ENCODE measurements at regions of chr15 and their contacts with region 1.

Region 1: GRCh38 chr15:25933456-25934158 is 70.5 kb upstream of the ATP10A start:
- DNase-seq: peak; percentile 58 to 69 (median 63)
- H3K4me3 ChIP-seq: peak overlapping the region in 1 of 2 donors; percentile 50
- H3K4me3 Mint-ChIP-seq: peak overlapping the region; percentile 85 to 96 (median 90)
- H3K27ac ChIP-seq: no peak overlapping the region
- H3K27ac Mint-ChIP-seq: peak overlapping the region in 5 of 7 donors; percentile 64 to 79 (median 72)
- H3K4me1 ChIP-seq: peaks cover 8% of the 10 kb centered on the region
- H3K4me1 Mint-ChIP-seq: peaks cover 2 to 6% (median 4%) of the 10 kb centered on the region in 4 donors
- H3K27me3 ChIP-seq: no peaks in the 10 kb centered on the region
- H3K27me3 Mint-ChIP-seq: peaks cover 3 to 6% of the 10 kb centered on the region in 2 donors

Region 2: DNA sequence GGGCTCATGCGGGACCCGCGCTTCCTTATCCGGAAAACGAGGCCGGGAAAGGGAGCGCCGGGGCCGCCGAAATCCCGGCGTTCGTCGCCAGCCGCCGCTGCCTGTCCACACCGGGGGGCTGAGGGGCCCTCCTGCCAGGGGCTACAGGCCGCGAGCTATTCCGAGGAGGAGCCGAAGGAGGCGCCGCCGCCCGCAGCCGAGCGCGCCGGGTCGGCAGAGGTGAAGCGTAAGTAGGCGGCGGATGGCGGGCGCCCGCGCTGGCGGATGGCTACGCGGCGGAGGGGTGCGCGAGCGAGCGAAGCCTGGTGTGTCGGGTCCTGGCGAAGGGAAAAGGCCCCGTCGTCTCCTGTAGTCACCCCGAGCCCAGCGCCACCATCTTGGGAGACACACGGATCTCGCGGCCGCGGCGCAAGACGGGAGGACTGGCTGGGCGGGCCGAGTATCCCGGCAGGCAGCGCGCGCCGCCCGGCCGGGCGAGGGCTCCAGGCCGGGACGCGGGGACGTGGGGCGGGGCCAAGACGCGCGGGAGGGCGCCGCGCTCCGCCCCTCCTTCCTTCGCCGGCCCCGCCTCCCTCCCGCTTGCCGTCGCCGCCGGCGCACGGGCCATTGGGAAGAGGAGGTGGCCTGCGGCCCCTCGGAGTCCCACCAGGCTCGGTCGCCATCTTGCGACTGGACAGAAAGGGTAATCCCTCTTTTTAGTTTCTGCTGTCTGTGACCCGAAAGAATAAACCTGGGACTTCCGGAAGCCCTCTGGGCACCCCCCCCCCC is 494.8 kb before region 1 on chr15 and contains the start of gene UBE3A:
- CTCF ChIA-PET with region 1: interaction called, 4 read pairs
- POLR2A ChIA-PET with region 1: no interaction called
- intact Hi-C with region 1: loop called (anchors 10 kb)
- DNase-seq: peak; percentile 85 to 90 (median 87)
- H3K4me3 ChIP-seq: peak within 1 kb of the TSS; percentile 67 to 73
- H3K4me3 Mint-ChIP-seq: peak within 1 kb of the TSS; percentile 85 to 98 (median 94)
- H3K27ac ChIP-seq: peak within 1 kb of the TSS; percentile 84
- H3K27ac Mint-ChIP-seq: peak within 1 kb of the TSS; percentile 87 to 97 (median 94)
- H3K4me1 ChIP-seq: peaks cover 43% of the 10 kb centered on the region
- H3K4me1 Mint-ChIP-seq: peaks cover 33 to 43% (median 38%) of the 10 kb centered on the region in 4 donors
- H3K27me3 ChIP-seq: no peaks in the 10 kb centered on the region
- H3K27me3 Mint-ChIP-seq: no peaks in the 10 kb centered on the region
- total RNA-seq, gene UBE3A: 115 to 140 TPM

Region 3: GRCh38 chr15:25695875-25696760 is 237.5 kb before region 1 on chr15:
- CTCF ChIA-PET with region 1: interaction called, 14 read pairs
- POLR2A ChIA-PET with region 1: no interaction called
- intact Hi-C with region 1: no loop called
- DNase-seq: no peak
- H3K4me3 ChIP-seq: no peak overlapping the region
- H3K4me3 Mint-ChIP-seq: no peak overlapping the region
- H3K27ac ChIP-seq: no peak overlapping the region
- H3K27ac Mint-ChIP-seq: no peak overlapping the region
- H3K4me1 ChIP-seq: no peaks in the 10 kb centered on the region
- H3K4me1 Mint-ChIP-seq: peaks cover 0 to 3% (median 0%) of the 10 kb centered on the region in 4 donors
- H3K27me3 ChIP-seq: no peaks in the 10 kb centered on the region
- H3K27me3 Mint-ChIP-seq: no peaks in the 10 kb centered on the region

Region 4: GRCh38 chr15:25739687-25740121 is 193.9 kb before region 1 on chr15:
- CTCF ChIA-PET with region 1: interaction called, 30 read pairs
- POLR2A ChIA-PET with region 1: no interaction called
- intact Hi-C with region 1: loop called (anchors 1 kb)
- DNase-seq: peak in 4 of 5 donors; percentile 18 to 29 (median 28)
- H3K4me3 ChIP-seq: no peak overlapping the region
- H3K4me3 Mint-ChIP-seq: no peak overlapping the region
- H3K27ac ChIP-seq: no peak overlapping the region
- H3K27ac Mint-ChIP-seq: peak overlapping the region in 1 of 7 donors; percentile 49
- H3K4me1 ChIP-seq: peaks cover 6% of the 10 kb centered on the region
- H3K4me1 Mint-ChIP-seq: peaks cover 13 to 34% (median 18%) of the 10 kb centered on the region in 4 donors
- H3K27me3 ChIP-seq: no peaks in the 10 kb centered on the region
- H3K27me3 Mint-ChIP-seq: no peaks in the 10 kb centered on the region

Region 5: DNA sequence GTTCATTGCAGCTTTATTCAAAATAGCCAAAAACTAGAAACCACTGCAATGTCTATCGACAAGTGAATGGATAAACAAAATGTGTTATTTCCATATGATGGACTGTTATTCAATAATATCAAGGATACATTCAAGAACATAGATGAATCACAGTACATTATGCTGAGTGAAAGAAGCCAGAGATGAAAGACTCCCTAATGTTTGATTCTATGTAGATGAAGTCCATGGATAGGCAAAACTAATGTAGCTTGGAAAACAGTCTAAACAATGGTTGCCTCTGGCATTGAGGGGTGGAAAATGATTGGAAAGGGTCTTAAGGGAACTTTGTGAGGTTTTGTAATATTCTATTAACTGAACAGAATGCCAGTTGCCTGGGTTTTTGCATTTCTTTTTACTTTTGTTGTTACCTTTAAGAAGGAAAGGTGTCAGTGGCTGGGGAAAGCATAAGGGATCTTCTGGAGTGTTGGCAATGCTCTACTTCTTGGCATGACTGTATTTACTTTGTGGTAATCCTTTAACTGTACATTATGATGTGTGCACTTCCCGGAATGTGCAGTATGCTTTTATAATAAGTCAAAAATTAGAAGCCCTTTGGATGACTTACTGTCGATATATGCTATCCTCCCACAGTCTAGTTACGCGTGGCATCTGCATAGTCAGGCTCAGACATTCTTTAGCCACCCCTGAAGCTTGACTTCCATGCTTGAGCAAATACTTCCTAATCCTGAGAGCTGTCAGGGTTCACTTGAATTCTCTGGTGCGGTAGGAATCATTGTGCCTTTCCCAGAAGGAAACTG is 49.9 kb before region 1 on chr15:
- CTCF ChIA-PET with region 1: no interaction called
- POLR2A ChIA-PET with region 1: no interaction called
- intact Hi-C with region 1: no loop called
- DNase-seq: no peak
- H3K4me3 ChIP-seq: no peak overlapping the region
- H3K4me3 Mint-ChIP-seq: no peak overlapping the region
- H3K27ac ChIP-seq: no peak overlapping the region
- H3K27ac Mint-ChIP-seq: no peak overlapping the region
- H3K4me1 ChIP-seq: no peaks in the 10 kb centered on the region
- H3K4me1 Mint-ChIP-seq: no peaks in the 10 kb centered on the region
- H3K27me3 ChIP-seq: no peaks in the 10 kb centered on the region
- H3K27me3 Mint-ChIP-seq: no peaks in the 10 kb centered on the region

Region 6: GRCh38 chr15:26082221-26083109 is 148.9 kb after region 1 on chr15:
- CTCF ChIA-PET with region 1: no interaction called
- POLR2A ChIA-PET with region 1: no interaction called
- intact Hi-C with region 1: loop called (anchors 5 kb)
- DNase-seq: peak; percentile 92 to 96 (median 95)
- H3K4me3 ChIP-seq: peak overlapping the region; percentile 53 to 68
- H3K4me3 Mint-ChIP-seq: peak overlapping the region; percentile 86 to 95 (median 90)
- H3K27ac ChIP-seq: peak overlapping the region; percentile 62
- H3K27ac Mint-ChIP-seq: peak overlapping the region; percentile 94 to 100 (median 97)
- H3K4me1 ChIP-seq: peaks cover 19% of the 10 kb centered on the region
- H3K4me1 Mint-ChIP-seq: peaks cover 25 to 49% (median 41%) of the 10 kb centered on the region in 4 donors
- H3K27me3 ChIP-seq: no peaks in the 10 kb centered on the region
- H3K27me3 Mint-ChIP-seq: peaks cover 0 to 3% of the 10 kb centered on the region in 2 donors

Measured in CD4-positive, alpha-beta memory T cell (primary cell).